Spleen (tissue), 13 donors: ENCODE measurements at regions of chr11 and their contacts with region 1.

Region 1: DNA sequence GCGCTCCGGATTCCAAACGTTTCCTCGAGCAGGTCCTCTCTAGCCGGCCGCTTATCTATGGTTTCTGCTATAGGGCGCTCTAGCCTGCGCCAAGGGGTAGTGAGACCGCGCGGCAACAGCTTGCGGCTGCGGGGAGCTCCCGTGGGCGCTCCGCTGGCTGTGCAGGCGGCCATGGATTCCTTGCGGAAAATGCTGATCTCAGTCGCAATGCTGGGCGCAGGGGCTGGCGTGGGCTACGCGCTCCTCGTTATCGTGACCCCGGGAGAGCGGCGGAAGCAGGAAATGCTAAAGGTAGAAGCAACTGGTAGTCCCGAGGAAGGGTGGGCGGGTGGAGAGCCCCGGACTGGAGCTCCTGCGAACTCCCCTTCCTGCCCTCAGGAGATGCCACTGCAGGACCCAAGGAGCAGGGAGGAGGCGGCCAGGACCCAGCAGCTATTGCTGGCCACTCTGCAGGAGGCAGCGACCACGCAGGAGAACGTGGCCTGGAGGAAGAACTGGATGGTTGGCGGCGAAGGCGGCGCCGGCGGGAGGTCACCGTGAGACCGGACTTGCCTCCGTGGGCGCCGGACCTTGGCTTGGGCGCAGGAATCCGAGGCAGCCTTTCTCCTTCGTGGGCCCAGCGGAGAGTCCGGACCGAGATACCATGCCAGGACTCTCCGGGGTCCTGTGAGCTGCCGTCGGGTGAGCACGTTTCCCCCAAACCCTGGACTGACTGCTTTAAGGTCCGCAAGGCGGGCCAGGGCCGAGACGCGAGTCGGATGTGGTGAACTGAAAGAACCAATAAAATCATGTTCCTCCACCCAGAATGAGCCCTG is at the starts of genes LBHD1 and UQCC3:
- DNase-seq: peak; percentile 92
- H3K4me3 ChIP-seq: peak within 1 kb of the TSS; percentile 76 to 96 (median 93)
- H3K27ac ChIP-seq: peak within 1 kb of the TSS; percentile 86 to 96 (median 94)
- H3K4me1 ChIP-seq: peaks cover 25 to 91% (median 68%) of the 10 kb centered on the region in 6 donors
- H3K27me3 ChIP-seq: no peaks in the 10 kb centered on the region
- CTCF ChIP-seq: peak in 1 of 11 experiments; percentile 3
- POLR2A ChIP-seq: peak in 1 of 3 donors; percentile 65
- total RNA-seq, gene LBHD1: 10.0 to 20.2 (median 12.8) TPM
- total RNA-seq, gene UQCC3: 4.9 to 6.5 (median 5.9) TPM

Region 2: GRCh38 chr11:62208785-62209144 is 463.0 kb before region 1 on chr11:
- intact Hi-C with region 1: no loop called
- DNase-seq: no peak
- H3K4me3 ChIP-seq: no peak overlapping the region
- H3K27ac ChIP-seq: no peak overlapping the region
- H3K4me1 ChIP-seq: no peaks in the 10 kb centered on the region
- H3K27me3 ChIP-seq: peaks cover 0 to 18% (median 0%) of the 10 kb centered on the region in 7 donors
- CTCF ChIP-seq: no peak
- POLR2A ChIP-seq: no peak

Region 3: GRCh38 chr11:62591448-62592145 is 80.2 kb before region 1 on chr11 and contains the start of gene TUT1:
- intact Hi-C with region 1: loop called (anchors 10 kb)
- DNase-seq: peak; percentile 97
- H3K4me3 ChIP-seq: peak within 1 kb of the TSS; percentile 43 to 84 (median 56)
- H3K27ac ChIP-seq: peak within 1 kb of the TSS; percentile 87 to 99 (median 98)
- H3K4me1 ChIP-seq: peaks cover 19 to 69% (median 46%) of the 10 kb centered on the region in 6 donors
- H3K27me3 ChIP-seq: no peaks in the 10 kb centered on the region
- CTCF ChIP-seq: peak in 5 of 11 experiments; percentile 19 to 48 (median 30)
- POLR2A ChIP-seq: peak; percentile 62 to 87 (median 62)
- total RNA-seq, gene TUT1: 14.4 to 30.9 (median 20.1) TPM

Region 4: DNA sequence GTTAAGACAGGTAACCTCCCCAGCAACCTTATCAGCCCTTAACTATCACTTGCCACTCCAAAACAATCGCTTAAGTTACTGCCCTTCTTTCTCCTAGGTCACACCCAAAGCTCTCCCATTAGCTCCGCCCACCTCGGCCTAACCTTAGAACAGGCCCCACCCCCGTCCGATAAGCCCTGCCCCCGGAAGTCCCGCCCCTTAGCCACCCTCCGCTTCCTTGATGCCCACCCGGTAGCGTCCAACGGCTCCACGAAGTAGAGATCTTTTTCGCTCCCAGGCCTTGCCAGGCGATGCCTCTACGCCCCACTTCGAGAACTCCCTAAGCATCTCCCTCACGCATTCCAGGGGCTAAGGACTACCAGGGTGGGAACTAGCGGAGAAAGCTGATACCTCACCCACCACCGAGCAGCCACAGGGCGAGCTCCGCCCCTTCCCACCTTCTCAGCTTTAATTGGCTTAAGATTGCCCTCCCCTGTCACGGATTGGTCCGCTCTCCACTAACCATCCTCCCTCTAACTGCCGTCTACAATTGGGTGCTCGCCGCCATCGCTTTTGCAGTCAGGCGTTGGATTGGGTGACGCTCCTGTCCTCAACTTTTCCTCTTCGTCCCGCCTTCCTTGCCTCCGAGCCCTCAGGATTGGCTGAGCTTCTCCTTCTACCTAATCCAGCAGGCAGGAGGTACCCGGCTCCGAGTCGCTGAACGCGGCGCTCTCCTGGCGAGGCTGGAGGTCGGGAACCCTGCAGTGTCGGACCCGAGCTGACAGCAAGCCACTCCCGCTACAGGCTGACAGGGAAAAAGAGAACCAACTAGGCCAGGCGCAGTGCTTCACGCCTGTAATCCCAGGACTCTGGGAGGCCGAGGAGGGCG is 82.2 kb after region 1 on chr11 and contains the start of gene ZBTB3:
- intact Hi-C with region 1: no loop called
- DNase-seq: peak; percentile 97
- H3K4me3 ChIP-seq: peak within 1 kb of the TSS; percentile 58 to 80 (median 65)
- H3K27ac ChIP-seq: peak within 1 kb of the TSS; percentile 91 to 98 (median 96)
- H3K4me1 ChIP-seq: peaks cover 7 to 56% (median 28%) of the 10 kb centered on the region in 6 donors
- H3K27me3 ChIP-seq: no peaks in the 10 kb centered on the region
- CTCF ChIP-seq: peak in 6 of 11 experiments; percentile 30 to 73 (median 40)
- POLR2A ChIP-seq: peak; percentile 38 to 63 (median 38)
- total RNA-seq, gene ZBTB3: 6.6 to 14.5 (median 11.1) TPM